Right cardiac atrium (tissue), 5 donors: ENCODE measurements at regions of chr15 and their contacts with region 1.

Region 1: GRCh38 chr15:43133430-43134156 is at the start of gene TMEM62:
- DNase-seq: peak; percentile 86 to 93 (median 93)
- ATAC-seq: peak; percentile 93 to 96
- H3K4me3 ChIP-seq: peak within 1 kb of the TSS; percentile 88
- H3K27ac ChIP-seq: peak within 1 kb of the TSS; percentile 80
- H3K4me1 ChIP-seq: no peaks in the 10 kb centered on the region
- H3K27me3 ChIP-seq: no peaks in the 10 kb centered on the region
- total RNA-seq, gene TMEM62: 9.8 to 11.2 (median 10.4) TPM

Region 2: GRCh38 chr15:43105778-43106485 is 27.7 kb before region 1 on chr15 and contains the start of gene UBR1:
- intact Hi-C with region 1: loop called in 1 of 4 experiments (anchors 2 kb)
- DNase-seq: peak; percentile 94 to 97 (median 96)
- ATAC-seq: peak; percentile 97 to 99
- H3K4me3 ChIP-seq: peak within 1 kb of the TSS; percentile 96
- H3K27ac ChIP-seq: peak within 1 kb of the TSS; percentile 97
- H3K4me1 ChIP-seq: peaks cover 2% of the 10 kb centered on the region
- H3K27me3 ChIP-seq: no peaks in the 10 kb centered on the region
- total RNA-seq, gene UBR1: 20.9 to 25.5 (median 21.0) TPM

Region 3: GRCh38 chr15:43184407-43185124 is 51.0 kb after region 1 on chr15:
- intact Hi-C with region 1: no loop called
- DNase-seq: peak in 1 of 3 donors; percentile 53
- ATAC-seq: peak; percentile 1 to 3
- H3K4me3 ChIP-seq: no peak overlapping the region
- H3K27ac ChIP-seq: peak overlapping the region; percentile 4
- H3K4me1 ChIP-seq: no peaks in the 10 kb centered on the region
- H3K27me3 ChIP-seq: no peaks in the 10 kb centered on the region